Calu3 (cell line): ENCODE measurements at regions of chr5 and their contacts with region 1.

Region 1: DNA sequence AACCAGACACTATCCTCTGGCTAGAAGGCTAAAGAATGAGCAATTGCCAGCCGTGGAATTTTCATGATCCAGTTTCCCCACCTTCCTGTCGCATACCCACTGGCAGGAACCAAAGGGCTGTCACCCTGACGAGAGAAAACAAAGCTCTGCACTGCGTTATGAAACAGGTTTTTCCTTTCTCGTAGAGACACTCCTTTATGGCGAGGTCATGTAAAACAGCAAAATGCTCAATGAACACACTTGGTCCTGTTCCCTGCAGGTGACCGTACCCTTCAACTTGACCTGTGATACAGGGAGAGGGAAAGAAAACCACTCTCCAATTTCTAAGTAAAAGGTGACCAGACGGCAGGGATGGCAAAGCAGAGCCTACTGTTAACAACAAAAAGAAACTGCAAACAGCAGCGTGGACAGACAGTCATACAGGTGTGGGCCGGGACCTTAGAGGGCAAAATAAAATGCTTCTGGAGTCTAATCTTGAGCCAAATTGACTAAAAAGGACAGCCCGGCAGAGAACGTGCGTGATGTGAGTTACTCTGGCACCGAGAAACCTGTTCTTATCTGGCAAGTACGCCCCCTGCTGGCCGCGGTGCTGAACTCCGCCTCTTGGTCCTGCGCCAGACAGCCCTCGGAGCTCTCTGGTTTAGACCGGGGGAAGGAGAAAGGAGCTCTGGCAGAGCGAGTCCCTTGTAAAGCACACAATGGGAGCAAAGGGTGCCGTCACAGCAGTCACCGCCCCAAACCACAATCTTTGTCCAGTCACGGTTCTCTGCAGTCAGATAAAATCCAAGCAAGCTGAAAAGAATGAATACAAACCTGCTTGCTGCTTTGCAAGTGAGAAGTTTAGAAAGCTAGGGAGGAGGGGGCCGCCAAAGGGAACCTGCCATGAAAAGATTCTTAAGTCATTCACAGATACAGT is 98.9 kb downstream of the EFNA5 start:
- DNase-seq: peak; percentile 99
- H3K4me3 Mint-ChIP-seq: peak overlapping the region; percentile 65
- H3K27ac Mint-ChIP-seq: peak overlapping the region; percentile 88
- H3K4me1 Mint-ChIP-seq: peaks cover 88% of the 10 kb centered on the region
- H3K27me3 Mint-ChIP-seq: no peaks in the 10 kb centered on the region
- CTCF ChIP-seq: peak; percentile 97

Region 2: GRCh38 chr5:107289030-107289714 is 282.7 kb before region 1 on chr5:
- CTCF ChIA-PET with region 1: no interaction called
- intact Hi-C with region 1: loop called (anchors 10 kb)
- DNase-seq: no peak
- H3K4me3 Mint-ChIP-seq: no peak overlapping the region
- H3K27ac Mint-ChIP-seq: peak overlapping the region; percentile 82
- H3K4me1 Mint-ChIP-seq: peaks cover 77% of the 10 kb centered on the region
- H3K27me3 Mint-ChIP-seq: no peaks in the 10 kb centered on the region
- CTCF ChIP-seq: no peak

Region 3: DNA sequence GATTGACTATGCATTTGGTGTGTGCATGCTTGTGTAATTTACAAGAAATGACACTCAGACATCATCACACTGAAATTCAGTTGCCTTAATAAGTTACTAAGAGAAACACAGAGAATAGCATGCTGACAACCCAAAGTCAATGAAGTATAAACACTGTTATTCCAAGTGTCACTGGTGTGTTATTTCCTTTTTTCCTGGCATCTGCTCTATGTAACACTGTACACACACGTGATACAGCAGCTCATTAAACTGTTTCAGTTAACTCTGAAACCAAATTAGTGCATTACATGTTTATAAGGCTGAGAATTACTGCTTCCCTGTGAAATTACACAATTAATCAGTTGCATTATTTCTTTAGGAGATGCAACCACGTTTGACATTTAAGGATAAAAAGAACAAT is 153.8 kb before region 1 on chr5:
- CTCF ChIA-PET with region 1: interaction called, 3 read pairs
- intact Hi-C with region 1: loop called (anchors 5 kb)
- DNase-seq: no peak
- H3K4me3 Mint-ChIP-seq: peak overlapping the region; percentile 13
- H3K27ac Mint-ChIP-seq: peak overlapping the region; percentile 41
- H3K4me1 Mint-ChIP-seq: peaks cover 83% of the 10 kb centered on the region
- H3K27me3 Mint-ChIP-seq: no peaks in the 10 kb centered on the region
- CTCF ChIP-seq: no peak

Region 4: GRCh38 chr5:107469485-107470294 is 102.2 kb before region 1 on chr5:
- CTCF ChIA-PET with region 1: interaction called, 21 read pairs
- intact Hi-C with region 1: loop called (anchors 2 kb)
- DNase-seq: peak; percentile 66
- H3K4me3 Mint-ChIP-seq: peak overlapping the region; percentile 45
- H3K27ac Mint-ChIP-seq: peak overlapping the region; percentile 96
- H3K4me1 Mint-ChIP-seq: peaks cover 95% of the 10 kb centered on the region
- H3K27me3 Mint-ChIP-seq: no peaks in the 10 kb centered on the region
- CTCF ChIP-seq: no peak

Region 5: DNA sequence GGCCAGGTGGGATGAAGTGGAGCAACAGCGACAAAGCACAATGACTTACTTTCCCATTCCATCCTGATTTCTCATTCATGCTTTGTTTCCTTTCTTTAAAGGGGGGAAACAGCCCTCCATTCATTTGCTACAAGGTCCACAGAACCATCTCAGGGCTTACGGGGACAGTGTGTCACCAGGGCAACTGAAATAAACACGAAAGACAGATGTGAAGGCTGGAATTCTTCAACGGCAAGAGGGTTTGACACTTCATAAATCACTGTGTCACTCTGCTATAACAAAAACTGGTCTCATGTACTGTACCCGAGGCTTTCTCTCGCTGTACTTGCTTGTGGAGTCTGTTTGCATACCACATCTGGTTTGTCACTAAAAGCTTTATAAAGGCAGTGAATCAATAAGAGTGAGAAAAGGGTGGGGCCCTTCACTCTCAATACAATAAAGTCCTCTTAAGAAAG is 52.0 kb before region 1 on chr5:
- CTCF ChIA-PET with region 1: no interaction called
- intact Hi-C with region 1: loop called (anchors 5 kb)
- DNase-seq: peak; percentile 55
- H3K4me3 Mint-ChIP-seq: peak overlapping the region; percentile 60
- H3K27ac Mint-ChIP-seq: peak overlapping the region; percentile 85
- H3K4me1 Mint-ChIP-seq: peaks cover 87% of the 10 kb centered on the region
- H3K27me3 Mint-ChIP-seq: no peaks in the 10 kb centered on the region
- CTCF ChIP-seq: no peak

Region 6: DNA sequence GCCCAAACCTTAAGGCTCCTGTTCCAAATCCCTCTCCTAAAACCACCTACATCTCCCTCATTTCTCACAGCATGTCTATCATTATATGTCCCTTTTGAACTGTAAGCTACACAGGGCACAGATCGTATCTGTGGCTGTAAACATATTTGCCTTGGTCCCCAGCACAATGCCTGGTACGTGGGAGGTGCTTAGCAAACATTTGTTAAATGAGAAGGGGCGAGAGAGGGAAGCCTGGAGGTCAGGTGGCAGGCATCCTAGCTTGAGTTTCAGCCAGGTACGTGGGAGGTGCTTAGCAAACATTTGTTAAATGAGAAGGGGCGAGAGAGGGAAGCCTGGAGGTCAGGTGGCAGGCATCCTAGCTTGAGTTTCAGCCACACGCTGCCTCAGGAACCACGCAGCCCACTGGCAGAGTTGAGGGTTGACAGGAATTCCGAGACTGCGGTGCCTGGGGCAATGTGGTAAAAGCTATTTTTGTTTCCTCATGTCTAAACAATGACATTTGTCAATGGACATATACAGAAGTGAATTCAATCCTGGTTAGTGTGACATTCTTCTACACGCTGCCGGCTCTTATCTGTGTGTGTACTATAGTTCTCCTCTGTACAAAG is 14.7 kb before region 1 on chr5:
- CTCF ChIA-PET with region 1: interaction called, 31 read pairs
- intact Hi-C with region 1: loop called (anchors 2 kb)
- DNase-seq: peak; percentile 92
- H3K4me3 Mint-ChIP-seq: peak overlapping the region; percentile 45
- H3K27ac Mint-ChIP-seq: peak overlapping the region; percentile 80
- H3K4me1 Mint-ChIP-seq: peaks cover 87% of the 10 kb centered on the region
- H3K27me3 Mint-ChIP-seq: no peaks in the 10 kb centered on the region
- CTCF ChIP-seq: no peak

Region 7: GRCh38 chr5:107619782-107620181 is 47.9 kb after region 1 on chr5:
- CTCF ChIA-PET with region 1: no interaction called
- intact Hi-C with region 1: no loop called
- DNase-seq: no peak
- H3K4me3 Mint-ChIP-seq: no peak overlapping the region
- H3K27ac Mint-ChIP-seq: peak overlapping the region; percentile 60
- H3K4me1 Mint-ChIP-seq: peaks cover 72% of the 10 kb centered on the region
- H3K27me3 Mint-ChIP-seq: no peaks in the 10 kb centered on the region
- CTCF ChIP-seq: no peak

Region 8: GRCh38 chr5:107665036-107665570 is 93.2 kb after region 1 on chr5:
- CTCF ChIA-PET with region 1: interaction called, 14 read pairs
- intact Hi-C with region 1: loop called (anchors 2 kb)
- DNase-seq: no peak
- H3K4me3 Mint-ChIP-seq: peak overlapping the region; percentile 66
- H3K27ac Mint-ChIP-seq: peak overlapping the region; percentile 89
- H3K4me1 Mint-ChIP-seq: peaks cover 42% of the 10 kb centered on the region
- H3K27me3 Mint-ChIP-seq: no peaks in the 10 kb centered on the region
- CTCF ChIP-seq: no peak

Region 9: GRCh38 chr5:108111736-108112135 is 539.9 kb after region 1 on chr5:
- CTCF ChIA-PET with region 1: no interaction called
- intact Hi-C with region 1: no loop called
- DNase-seq: no peak
- H3K4me3 Mint-ChIP-seq: no peak overlapping the region
- H3K27ac Mint-ChIP-seq: no peak overlapping the region
- H3K4me1 Mint-ChIP-seq: no peaks in the 10 kb centered on the region
- H3K27me3 Mint-ChIP-seq: no peaks in the 10 kb centered on the region
- CTCF ChIP-seq: no peak